ENCODE measurements at regions of chr3 and their contacts with region 1.

Region 1: GRCh38 chr3:23253214-23253613 is 50.1 kb downstream of the UBE2E2 start:
- DNase-seq: peak; percentile 22
- CTCF ChIP-seq: no peak

Region 2: DNA sequence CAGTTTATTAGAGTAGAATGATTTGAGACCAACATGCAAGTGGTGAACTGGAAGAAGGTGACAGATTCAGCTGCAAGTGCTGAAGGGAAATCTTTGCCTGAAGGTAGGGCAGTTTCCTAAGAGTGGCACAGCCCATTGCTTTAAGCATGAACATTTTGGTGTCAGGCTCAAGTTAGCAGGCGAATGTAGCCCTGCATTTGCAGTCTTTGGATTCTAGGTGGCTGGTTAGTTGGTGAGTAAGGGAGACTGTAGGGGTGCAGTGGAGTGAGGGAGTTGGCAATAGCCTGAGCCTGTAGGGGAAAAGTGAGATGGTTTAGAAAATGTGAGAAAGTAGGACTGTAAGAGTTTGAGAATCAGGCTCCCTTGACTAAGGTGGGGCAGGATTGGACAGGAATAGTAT is 20.4 kb before region 1 on chr3:
- CTCF ChIA-PET with region 1: interaction called, 15 read pairs
- POLR2A ChIA-PET with region 1: no interaction called
- DNase-seq: no peak
- CTCF ChIP-seq: no peak

Region 3: GRCh38 chr3:23241256-23241655 is 12.0 kb before region 1 on chr3:
- CTCF ChIA-PET with region 1: interaction called, 12 read pairs
- POLR2A ChIA-PET with region 1: no interaction called
- DNase-seq: no peak
- CTCF ChIP-seq: no peak